ENCODE measurements at regions of chr7 and their contacts with region 1.

Region 1: DNA sequence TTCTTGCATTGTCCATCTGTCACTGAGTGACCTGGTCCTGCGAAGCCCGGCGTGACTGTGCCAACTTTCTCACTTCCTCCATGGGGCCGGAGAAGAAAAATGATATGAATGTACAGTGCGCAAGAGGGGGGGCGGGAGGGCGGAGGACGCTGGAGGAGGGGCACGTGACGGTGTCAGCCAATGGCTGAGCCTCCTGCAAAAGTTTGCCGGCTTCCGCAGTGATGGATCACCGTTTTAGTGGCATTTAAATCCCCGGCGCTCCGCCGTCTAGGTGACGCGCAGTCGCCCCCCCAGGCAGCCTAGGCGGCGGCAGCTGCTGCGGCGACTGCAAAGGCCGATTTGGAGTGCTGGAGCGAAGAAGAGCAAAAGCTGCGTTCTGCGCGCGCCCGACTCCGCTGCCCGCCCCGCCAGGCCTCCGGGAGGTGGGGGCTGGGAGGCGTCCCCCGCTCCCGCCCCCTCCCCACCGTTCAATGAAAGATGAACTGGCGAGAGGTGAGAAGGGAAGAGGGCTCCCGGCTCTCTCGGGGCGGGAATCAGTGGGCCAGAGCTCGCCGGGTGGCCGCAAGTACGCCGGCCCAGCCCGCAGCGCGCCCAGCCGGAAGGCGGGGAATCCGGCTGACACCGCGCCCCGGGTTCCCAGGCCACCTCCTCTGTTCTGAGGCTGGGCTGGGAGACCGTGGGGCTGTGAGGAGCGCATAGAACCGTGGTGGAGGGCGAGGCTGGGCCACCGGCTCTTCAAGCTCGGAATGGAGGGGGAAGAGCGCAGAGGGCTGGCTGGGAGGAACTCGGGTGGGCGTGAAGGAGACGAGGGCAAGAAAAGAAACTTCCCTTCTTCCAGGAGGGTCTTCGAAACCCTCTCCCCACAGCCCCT is at the start of gene HOXA1:
- DNase-seq: peak; percentile 75 to 88
- H3K4me3 ChIP-seq: peak within 1 kb of the TSS; percentile 80 to 83
- H3K27ac ChIP-seq: peak within 1 kb of the TSS; percentile 80 to 81
- H3K4me1 ChIP-seq: peaks cover 0 to 23% (median 18%) of the 10 kb centered on the region in 4 donors
- H3K27me3 ChIP-seq: no peaks in the 10 kb centered on the region
- CTCF ChIP-seq: no peak

Region 2: DNA sequence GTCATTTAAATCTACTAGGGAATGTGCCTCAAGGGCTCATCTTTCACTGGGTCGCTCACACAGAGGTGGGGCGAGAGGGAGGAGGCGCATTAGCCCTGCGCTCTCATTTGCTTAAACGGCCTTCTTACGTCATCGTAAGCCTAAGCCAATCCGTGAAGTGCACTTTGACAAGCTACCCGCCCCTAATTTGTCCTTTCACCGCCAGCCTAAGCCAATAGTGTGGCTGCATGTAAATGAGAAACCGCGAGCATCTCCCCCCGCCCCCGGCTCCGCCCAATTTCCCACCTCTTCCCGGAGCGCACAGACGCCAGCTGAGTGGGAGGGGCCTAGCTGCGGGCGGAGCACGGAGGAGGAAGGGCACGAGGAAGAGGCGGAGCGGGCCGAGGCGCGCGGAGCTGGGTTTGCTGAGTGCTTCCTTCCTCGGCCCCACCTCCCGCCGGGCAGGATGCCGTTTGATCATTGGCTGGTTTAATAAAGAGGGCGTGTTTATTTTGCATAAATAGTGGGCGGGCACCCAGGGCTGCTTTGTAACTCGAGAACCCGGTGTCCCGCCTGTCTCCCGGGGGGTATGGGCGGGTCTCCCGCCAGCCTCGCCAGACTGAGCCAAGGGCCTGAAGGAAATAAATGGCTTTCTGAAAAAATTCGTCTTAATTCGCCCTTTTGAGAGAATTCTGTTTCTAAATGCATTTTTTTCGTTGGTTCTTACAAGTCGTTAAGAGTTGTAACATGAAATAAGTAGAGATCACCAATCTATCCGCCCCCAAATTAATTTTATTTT is 1233.7 kb before region 1 on chr7:
- intact Hi-C with region 1: loop called (anchors 10 kb)
- DNase-seq: peak; percentile 95 to 99
- H3K4me3 ChIP-seq: peak overlapping the region; percentile 17 to 30
- H3K27ac ChIP-seq: peak overlapping the region in 1 of 2 donors; percentile 5
- H3K4me1 ChIP-seq: peaks cover 0 to 12% (median 3%) of the 10 kb centered on the region in 4 donors
- H3K27me3 ChIP-seq: peaks cover 10 to 70% of the 10 kb centered on the region in 2 donors
- CTCF ChIP-seq: no peak

Region 3: DNA sequence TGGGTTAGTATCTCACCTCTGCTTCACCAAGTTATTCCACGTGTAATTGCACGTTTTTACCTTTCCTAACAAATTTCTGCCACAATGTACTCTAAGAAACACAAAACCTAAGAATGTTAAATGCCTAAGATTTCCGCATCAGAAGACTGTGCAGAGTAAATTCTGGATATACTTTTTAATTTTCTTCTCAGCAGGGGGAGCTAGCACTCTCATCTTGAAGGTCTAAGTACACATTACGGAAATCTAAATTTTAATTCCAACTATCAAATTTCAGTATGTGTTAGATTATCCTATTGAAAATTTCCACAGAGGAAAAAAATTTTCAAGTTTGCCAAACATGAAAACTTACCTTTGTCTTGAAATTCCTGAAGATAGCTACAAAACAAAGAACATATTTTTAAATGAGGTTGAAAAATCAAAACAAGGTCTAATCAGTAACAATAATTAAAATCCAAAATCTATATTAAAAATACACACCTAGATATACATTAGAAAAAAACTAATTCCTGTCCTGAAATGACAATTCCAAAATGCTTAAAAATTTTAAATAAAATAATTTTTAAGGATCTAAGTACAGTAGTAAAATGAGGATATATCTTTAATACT is 242.2 kb before region 1 on chr7:
- intact Hi-C with region 1: loop called (anchors 5 kb)
- DNase-seq: no peak
- H3K4me3 ChIP-seq: no peak overlapping the region
- H3K27ac ChIP-seq: no peak overlapping the region
- H3K4me1 ChIP-seq: no peaks in the 10 kb centered on the region
- H3K27me3 ChIP-seq: peaks cover 0 to 35% of the 10 kb centered on the region in 2 donors
- CTCF ChIP-seq: peak; percentile 46 to 64

Region 4: GRCh38 chr7:27032839-27033238 is 63.3 kb before region 1 on chr7:
- intact Hi-C with region 1: no loop called
- DNase-seq: no peak
- H3K4me3 ChIP-seq: no peak overlapping the region
- H3K27ac ChIP-seq: no peak overlapping the region
- H3K4me1 ChIP-seq: peaks cover 0 to 19% (median 5%) of the 10 kb centered on the region in 4 donors
- H3K27me3 ChIP-seq: no peaks in the 10 kb centered on the region
- CTCF ChIP-seq: no peak

Region 5: GRCh38 chr7:27143023-27143949 is 47.2 kb after region 1 on chr7 and contains the start of gene HOXA5:
- intact Hi-C with region 1: loop called (anchors 5 kb)
- DNase-seq: peak; percentile 63 to 73
- H3K4me3 ChIP-seq: peak within 1 kb of the TSS; percentile 39 to 49
- H3K27ac ChIP-seq: peak within 1 kb of the TSS; percentile 52 to 58
- H3K4me1 ChIP-seq: peaks cover 0 to 19% (median 12%) of the 10 kb centered on the region in 4 donors
- H3K27me3 ChIP-seq: no peaks in the 10 kb centered on the region
- CTCF ChIP-seq: peak; percentile 39 to 40

Region 6: GRCh38 chr7:27697861-27698430 is 601.8 kb after region 1 on chr7:
- intact Hi-C with region 1: no loop called
- DNase-seq: peak; percentile 45 to 65
- H3K4me3 ChIP-seq: no peak overlapping the region
- H3K27ac ChIP-seq: no peak overlapping the region
- H3K4me1 ChIP-seq: no peaks in the 10 kb centered on the region
- H3K27me3 ChIP-seq: no peaks in the 10 kb centered on the region
- CTCF ChIP-seq: no peak

Measured in tibial artery (tissue), 4 donors.